ENCODE measurements at regions of chr2 and their contacts with region 1.

Region 1: DNA sequence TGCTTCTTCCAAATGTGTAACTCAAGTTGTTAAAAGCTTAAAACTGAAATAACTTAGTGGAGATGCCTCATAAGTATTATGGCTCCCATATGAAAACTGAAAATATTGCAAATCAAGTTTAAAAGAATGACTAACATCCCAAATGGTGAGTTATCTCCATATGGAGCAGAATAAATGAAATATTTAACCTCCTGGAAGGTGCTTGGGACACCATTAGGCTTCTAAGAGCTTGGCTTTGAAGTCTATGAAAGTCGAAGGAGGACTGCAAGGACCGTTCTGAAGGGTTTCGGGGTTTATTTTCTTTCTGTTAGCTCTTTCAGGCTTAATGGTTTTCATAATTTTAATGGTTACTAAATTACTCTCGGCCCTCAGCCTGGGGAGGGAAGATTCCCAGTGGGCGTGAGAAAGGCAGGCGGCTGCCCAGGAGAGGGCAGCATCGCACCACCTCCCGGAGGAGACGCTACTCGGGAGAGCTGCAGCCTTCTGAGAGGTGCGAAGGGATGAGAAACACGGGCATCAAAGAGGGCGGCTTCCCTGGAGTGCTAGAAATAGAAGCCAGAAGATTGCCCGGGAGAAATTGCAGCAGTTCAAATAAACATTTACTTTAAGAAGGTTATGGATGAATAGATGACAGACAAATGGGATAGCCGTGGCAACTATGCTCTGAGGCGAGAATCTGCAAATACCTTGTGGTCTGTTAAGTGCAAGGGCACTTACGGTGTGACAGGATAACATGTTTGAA is 43.1 kb downstream of the MAP3K19 start:
- DNase-seq: peak; percentile 57
- H3K4me3 ChIP-seq: no peak overlapping the region
- H3K27ac ChIP-seq: no peak overlapping the region
- H3K4me1 ChIP-seq: no peaks in the 10 kb centered on the region
- H3K27me3 ChIP-seq: no peaks in the 10 kb centered on the region
- CTCF ChIP-seq: peak; percentile 90 to 97

Region 2: GRCh38 chr2:135258193-135258592 is 254.0 kb after region 1 on chr2:
- CTCF ChIA-PET with region 1: no interaction called
- dilution Hi-C with region 1: no loop called
- in situ Hi-C with region 1: no loop called
- intact Hi-C with region 1: loop called (anchors 1 kb)
- DNase-seq: peak; percentile 6
- H3K4me3 ChIP-seq: no peak overlapping the region
- H3K27ac ChIP-seq: peak overlapping the region; percentile 74
- H3K4me1 ChIP-seq: peaks cover 27% of the 10 kb centered on the region
- H3K27me3 ChIP-seq: no peaks in the 10 kb centered on the region
- CTCF ChIP-seq: peak in 1 of 2 donors; percentile 19

Region 3: DNA sequence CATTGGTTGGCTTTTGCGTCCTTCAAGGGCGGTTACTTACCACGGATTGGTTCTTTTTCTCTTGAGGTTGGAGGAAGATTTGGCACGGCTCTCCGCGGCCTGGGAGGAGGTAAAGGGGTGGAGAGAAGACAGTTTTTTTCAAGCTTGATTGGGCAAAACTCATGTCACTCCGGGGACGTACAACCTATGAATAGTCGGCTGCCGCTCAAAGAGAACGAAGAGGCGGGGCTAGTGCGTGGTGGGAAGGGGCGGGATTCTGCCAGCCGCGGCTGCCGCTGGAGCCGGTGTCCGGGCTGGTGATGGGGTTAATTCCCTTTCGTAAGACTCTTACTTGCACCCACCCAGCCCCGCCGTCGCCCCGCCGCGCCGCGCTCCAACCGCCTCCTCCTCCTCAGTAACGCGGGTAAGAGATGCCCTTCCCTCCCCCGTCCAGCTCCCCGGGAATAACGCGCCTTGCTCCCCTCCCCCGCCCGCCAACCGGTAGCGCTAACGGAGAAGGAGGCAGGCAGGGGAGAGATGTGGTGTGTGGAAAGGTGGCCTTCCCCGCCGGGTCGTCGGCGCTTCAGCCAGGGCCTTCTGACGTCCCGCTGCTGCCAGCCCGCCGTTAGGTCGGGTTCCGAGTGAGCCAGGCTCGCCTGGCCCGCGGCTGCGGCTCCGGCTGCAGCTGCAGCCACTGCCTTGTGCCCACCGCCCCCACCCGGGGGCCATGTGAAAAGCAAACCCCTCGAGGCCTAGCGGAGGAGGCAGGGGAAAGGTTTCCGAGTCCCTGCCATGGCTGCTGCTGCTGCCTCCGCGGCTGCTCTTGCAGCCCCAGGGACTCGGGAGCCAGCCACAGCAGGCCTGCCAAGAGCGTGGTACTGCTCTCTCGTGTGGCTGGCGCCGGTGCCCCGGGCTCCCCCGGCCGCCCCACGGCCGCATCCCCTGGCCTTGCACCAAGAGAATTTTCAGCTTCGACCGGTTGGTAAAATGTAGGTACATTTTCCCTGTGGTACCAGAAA is 527.4 kb after region 1 on chr2 and contains the start of gene R3HDM1:
- CTCF ChIA-PET with region 1: no interaction called
- dilution Hi-C with region 1: no loop called
- in situ Hi-C with region 1: no loop called
- intact Hi-C with region 1: loop called (anchors 2 kb)
- DNase-seq: peak; percentile 100
- H3K4me3 ChIP-seq: peak within 1 kb of the TSS; percentile 88 to 93 (median 89)
- H3K27ac ChIP-seq: peak within 1 kb of the TSS; percentile 95
- H3K4me1 ChIP-seq: peaks cover 34% of the 10 kb centered on the region
- H3K27me3 ChIP-seq: no peaks in the 10 kb centered on the region
- CTCF ChIP-seq: peak in 1 of 2 donors; percentile 26
- total RNA-seq, gene R3HDM1: 17.3 to 45.2 TPM

Region 4: DNA sequence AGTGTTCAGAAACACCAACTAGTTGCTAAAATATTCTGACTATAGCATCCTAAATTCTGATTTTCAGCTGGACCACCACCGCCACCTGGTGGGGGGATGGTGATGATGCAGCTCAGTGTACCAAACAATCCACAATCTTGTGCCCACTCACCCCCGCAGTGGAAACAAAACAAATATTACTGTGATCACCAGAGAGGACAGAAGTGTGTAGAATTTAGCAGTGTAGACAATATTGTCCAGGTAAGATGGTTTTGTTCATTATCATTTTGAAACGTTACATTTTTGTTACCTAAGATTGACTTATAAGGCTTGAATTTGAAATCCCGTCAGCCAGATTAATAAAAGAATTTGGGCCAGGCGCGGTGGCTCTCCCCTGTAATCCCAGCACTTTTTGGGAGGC is 705.8 kb after region 1 on chr2:
- CTCF ChIA-PET with region 1: interaction called, 5 read pairs
- dilution Hi-C with region 1: no loop called
- in situ Hi-C with region 1: loop called (anchors 10 to 25 kb)
- intact Hi-C with region 1: loop called (anchors 1 kb)
- DNase-seq: peak; percentile 16
- H3K4me3 ChIP-seq: no peak overlapping the region
- H3K27ac ChIP-seq: no peak overlapping the region
- H3K4me1 ChIP-seq: no peaks in the 10 kb centered on the region
- H3K27me3 ChIP-seq: no peaks in the 10 kb centered on the region
- CTCF ChIP-seq: peak; percentile 90 to 94

Region 5: DNA sequence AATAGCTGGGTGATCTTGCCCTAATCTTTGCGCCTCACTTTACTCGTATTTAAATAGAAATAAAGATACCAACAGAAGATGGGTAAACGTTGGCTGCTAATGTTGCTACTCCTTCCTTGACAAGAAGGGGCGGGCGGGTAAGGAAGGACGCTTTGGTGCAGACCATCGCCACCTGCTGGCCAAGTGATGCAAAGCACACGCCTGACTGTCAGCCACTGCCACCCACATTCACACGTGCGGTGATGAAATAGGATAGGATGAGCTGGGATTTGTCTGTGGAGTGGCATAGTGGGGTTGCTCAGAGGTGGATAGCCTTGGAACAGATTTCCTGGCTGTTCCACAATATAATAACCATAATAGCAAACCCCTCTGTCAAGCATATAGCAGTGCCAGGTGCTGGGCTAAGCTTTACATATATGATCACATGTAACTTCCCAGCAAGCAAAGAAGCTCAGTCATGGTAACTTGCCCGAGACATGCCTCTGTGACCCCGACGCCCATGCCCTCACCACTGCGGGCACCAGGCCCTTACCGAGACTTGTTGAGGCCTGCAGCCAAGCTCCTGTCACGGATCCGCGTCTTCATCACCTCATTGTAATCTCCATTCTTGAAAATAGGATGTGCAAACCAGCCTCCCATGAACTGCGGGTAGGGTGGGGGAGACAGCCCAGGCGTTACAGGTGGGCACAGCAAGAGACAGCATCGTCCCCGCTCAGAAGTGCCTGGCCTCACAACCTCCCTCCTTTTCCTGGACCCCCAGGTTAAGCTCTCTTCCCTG is 793.5 kb after region 1 on chr2:
- CTCF ChIA-PET with region 1: no interaction called
- dilution Hi-C with region 1: no loop called
- in situ Hi-C with region 1: no loop called
- intact Hi-C with region 1: loop called (anchors 2 kb)
- DNase-seq: peak; percentile 66
- H3K4me3 ChIP-seq: no peak overlapping the region
- H3K27ac ChIP-seq: no peak overlapping the region
- H3K4me1 ChIP-seq: peaks cover 8% of the 10 kb centered on the region
- H3K27me3 ChIP-seq: no peaks in the 10 kb centered on the region
- CTCF ChIP-seq: peak; percentile 94 to 99

Region 6: DNA sequence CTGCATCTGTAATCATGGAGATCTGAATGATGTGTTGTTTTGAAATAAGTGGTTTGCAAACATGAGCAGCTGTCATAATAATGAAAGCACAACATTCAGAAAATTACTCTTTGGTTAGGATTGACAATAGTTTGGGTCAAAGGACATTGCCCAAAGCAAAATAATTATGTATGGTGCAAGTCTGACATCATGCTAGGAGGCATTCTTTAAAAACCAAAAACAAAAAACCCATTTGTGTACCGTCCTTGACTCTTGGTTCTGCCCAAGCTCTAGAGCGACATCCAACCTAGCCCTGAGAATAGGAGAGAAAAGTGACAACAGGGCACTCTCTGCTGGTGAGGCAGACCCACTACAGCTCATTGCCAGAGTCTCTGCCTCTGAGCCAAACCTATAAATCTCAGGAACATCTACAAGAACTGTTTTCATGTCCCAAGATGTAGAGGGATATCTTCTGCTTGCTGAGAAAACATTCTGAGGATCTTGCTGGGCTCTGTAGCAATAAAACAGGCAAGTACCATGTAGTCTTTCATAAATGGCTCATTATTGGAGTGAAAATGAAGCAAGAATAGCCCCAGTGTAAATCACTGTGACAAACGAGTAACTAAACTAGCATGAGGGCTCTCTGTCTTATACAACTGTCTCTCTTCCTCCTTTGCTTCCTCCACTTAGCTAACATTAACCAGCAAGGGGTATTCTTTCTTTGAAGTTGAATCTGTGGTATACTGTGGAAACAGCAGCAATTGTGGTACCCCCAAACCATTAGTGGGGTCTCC is 1380.5 kb after region 1 on chr2:
- CTCF ChIA-PET with region 1: no interaction called
- dilution Hi-C with region 1: no loop called
- in situ Hi-C with region 1: loop called in 1 of 2 experiments (anchors 25 kb)
- intact Hi-C with region 1: loop called (anchors 5 kb)
- DNase-seq: peak; percentile 40
- H3K4me3 ChIP-seq: no peak overlapping the region
- H3K27ac ChIP-seq: no peak overlapping the region
- H3K4me1 ChIP-seq: no peaks in the 10 kb centered on the region
- H3K27me3 ChIP-seq: peaks cover 2% of the 10 kb centered on the region
- CTCF ChIP-seq: peak; percentile 58 to 64